MCF 10A (cell line): ENCODE measurements at regions of chr17 and their contacts with region 1.

Region 1: DNA sequence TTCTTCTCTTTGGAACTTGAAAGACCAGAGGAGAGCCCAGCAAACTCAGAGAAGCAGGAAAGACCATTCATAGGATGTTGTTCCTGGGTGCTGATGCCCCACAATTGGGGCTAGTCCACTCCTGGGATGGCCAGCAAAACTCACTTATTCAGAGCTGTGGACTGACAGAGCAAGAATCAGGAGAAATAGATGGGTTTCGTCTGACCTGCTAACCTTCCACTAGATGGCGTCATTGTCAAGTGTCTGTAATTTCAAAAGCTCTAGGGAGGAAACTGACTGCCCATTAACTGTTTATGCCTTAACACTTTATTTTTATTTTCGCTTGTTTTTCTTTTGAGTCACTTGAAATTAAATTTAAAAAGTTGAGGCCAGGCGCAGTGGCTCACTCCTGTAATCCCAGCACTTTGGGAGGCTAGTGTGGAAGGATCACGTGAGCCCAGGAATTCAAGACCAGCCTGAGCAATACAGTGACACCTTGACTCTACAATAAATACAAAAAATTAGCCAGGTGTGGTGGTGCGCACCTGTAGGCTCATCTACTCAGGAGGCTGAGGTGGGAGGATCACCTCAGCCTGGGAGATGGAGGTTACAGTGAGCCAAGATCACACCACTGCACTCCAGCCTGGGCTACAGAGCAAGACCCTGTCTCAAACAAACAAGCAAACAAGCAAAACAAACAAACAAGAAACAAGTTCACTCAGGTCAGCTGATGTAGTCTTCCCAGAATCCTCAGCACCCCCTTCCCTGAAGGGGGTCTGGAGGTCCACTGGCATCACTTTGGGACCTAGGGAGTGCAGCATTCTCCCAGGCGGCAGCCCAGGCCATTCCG is 28.6 kb upstream of the MILR1 start:
- DNase-seq: peak; percentile 87
- H3K4me3 Mint-ChIP-seq: no peak overlapping the region
- H3K27ac Mint-ChIP-seq: no peak overlapping the region
- H3K4me1 Mint-ChIP-seq: no peaks in the 10 kb centered on the region
- H3K27me3 Mint-ChIP-seq: no peaks in the 10 kb centered on the region
- CTCF ChIP-seq: peak; percentile 73

Region 2: GRCh38 chr17:64262417-64263260 is 157.7 kb before region 1 on chr17 and contains the start of gene TEX2:
- CTCF ChIA-PET with region 1: no interaction called
- POLR2A ChIA-PET with region 1: no interaction called
- intact Hi-C with region 1: no loop called
- DNase-seq: peak; percentile 38
- H3K4me3 Mint-ChIP-seq: peak within 1 kb of the TSS; percentile 84
- H3K27ac Mint-ChIP-seq: peak within 1 kb of the TSS; percentile 36
- H3K4me1 Mint-ChIP-seq: peaks cover 24% of the 10 kb centered on the region
- H3K27me3 Mint-ChIP-seq: no peaks in the 10 kb centered on the region
- CTCF ChIP-seq: no peak
- total RNA-seq, gene TEX2: 33.7 and 42.2 TPM in 2 replicates

Region 3: DNA sequence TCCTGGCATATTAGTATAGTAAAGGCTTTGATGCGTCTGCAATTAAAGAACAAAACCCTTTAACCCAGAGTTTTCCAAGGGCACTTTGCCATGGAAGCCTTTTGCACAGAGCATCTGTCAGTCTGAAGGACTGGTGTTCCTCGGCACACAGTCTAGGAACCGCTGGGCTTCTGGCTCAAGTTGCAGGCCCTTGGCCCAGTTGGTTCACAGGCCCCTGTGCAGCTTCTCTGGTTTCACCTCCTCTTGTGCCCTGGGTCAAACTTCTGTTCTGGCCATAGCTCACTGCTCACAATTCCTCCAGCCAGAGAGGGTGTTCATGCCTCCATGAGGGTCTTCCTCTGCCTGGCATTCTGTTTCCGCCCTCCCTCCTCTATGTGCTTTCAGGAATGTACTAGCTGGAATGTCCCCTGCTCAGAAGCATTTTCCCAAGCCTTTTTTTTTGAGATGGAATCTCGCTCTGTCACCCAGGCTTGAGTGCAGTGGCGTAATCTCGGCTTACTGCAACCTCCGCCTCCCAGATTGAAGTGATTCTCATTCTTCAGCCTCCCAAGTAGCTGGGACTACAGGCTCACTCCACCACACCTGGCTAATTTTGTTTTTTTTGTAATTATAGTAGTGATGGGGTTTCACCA is 122.8 kb before region 1 on chr17:
- CTCF ChIA-PET with region 1: interaction called, 93 read pairs
- POLR2A ChIA-PET with region 1: interaction called, 4 read pairs
- intact Hi-C with region 1: no loop called
- DNase-seq: no peak
- H3K4me3 Mint-ChIP-seq: no peak overlapping the region
- H3K27ac Mint-ChIP-seq: no peak overlapping the region
- H3K4me1 Mint-ChIP-seq: no peaks in the 10 kb centered on the region
- H3K27me3 Mint-ChIP-seq: no peaks in the 10 kb centered on the region
- CTCF ChIP-seq: no peak

Region 4: DNA sequence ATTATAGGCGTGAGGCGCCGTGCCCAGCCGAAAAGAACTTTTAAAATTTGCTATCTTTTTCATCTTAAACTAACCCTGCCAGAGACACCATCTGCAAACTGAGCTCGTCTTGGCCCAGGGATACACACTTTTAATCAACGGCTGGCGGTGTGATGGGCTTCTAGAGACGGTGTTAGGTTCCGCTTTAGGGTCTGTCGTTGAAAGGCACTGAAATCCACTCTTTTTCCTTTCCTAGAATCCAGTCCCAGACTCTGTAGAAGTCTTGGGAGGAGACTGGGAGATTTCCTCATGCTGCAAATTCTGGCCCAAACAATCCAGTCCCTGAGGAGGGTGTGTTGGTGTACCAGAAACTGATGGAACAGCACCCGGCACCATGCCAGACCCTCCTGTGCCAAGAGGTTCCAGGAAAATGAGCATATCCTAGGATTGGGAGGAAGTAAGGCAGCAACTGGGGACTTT is 105.3 kb before region 1 on chr17:
- CTCF ChIA-PET with region 1: interaction called, 239 read pairs
- POLR2A ChIA-PET with region 1: interaction called, 4 read pairs
- intact Hi-C with region 1: no loop called
- DNase-seq: peak; percentile 86
- H3K4me3 Mint-ChIP-seq: no peak overlapping the region
- H3K27ac Mint-ChIP-seq: no peak overlapping the region
- H3K4me1 Mint-ChIP-seq: peaks cover 10% of the 10 kb centered on the region
- H3K27me3 Mint-ChIP-seq: no peaks in the 10 kb centered on the region
- CTCF ChIP-seq: no peak

Region 5: DNA sequence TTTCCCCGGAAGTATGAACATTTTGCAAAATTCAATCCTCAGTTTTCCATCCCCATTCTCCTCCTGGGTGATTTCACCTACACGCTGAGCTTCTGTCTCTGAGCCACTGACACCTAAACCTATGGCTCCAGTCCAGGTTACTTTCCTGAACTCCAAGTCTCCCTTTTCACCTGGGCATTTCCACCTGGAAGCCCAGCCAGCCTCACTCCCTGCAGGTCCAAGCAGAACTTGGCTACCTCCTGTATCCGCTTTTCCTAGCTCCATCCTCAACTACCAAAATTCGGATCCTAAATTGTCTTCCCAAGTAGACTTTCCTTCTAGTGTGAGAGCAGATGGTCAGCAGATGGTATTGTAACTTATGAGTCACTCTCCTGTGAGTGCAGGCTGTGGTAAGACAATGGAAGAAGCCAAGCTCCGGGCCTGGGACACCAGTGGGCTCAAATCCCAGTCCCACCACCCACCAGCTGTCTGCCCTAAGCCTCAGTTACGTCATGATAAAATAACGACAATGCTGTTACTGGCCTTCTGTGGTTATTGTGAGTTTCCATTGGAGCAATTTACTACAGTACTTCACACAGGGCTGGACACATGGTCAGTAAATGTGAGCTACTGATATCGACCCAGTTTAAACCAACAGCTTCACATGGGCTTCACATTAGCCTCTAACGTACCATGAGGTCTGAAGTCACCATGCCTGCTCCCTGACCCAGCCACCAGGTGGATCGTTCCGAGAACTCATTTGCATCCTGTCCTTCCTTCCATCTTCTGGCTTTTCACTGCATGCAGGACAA is 63.0 kb before region 1 on chr17:
- CTCF ChIA-PET with region 1: interaction called, 17 read pairs
- POLR2A ChIA-PET with region 1: no interaction called
- intact Hi-C with region 1: no loop called
- DNase-seq: peak; percentile 98
- H3K4me3 Mint-ChIP-seq: peak overlapping the region; percentile 15
- H3K27ac Mint-ChIP-seq: peak overlapping the region; percentile 76
- H3K4me1 Mint-ChIP-seq: peaks cover 36% of the 10 kb centered on the region
- H3K27me3 Mint-ChIP-seq: no peaks in the 10 kb centered on the region
- CTCF ChIP-seq: no peak

Region 6: DNA sequence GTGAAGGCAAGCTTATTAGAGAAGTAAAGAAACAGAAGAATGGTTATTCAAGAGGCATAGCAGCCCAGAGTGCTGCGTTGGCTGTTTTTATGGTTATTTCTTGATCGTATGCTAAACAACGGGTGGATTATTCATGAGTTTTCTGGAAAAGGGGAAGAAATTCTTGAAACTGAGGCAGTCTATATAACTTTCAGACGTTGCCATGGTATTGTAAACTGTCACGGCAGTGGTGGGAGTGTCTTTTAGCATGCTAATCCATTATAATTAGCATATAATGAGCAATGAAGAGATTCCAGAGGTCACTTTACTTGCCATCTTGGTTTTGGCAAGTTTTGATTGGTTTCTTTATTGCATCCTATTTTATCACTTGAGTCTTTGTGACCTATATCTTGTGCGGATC is 11.2 kb after region 1 on chr17:
- CTCF ChIA-PET with region 1: interaction called, 28 read pairs
- POLR2A ChIA-PET with region 1: no interaction called
- intact Hi-C with region 1: no loop called
- DNase-seq: no peak
- H3K4me3 Mint-ChIP-seq: no peak overlapping the region
- H3K27ac Mint-ChIP-seq: no peak overlapping the region
- H3K4me1 Mint-ChIP-seq: no peaks in the 10 kb centered on the region
- H3K27me3 Mint-ChIP-seq: no peaks in the 10 kb centered on the region
- CTCF ChIP-seq: no peak

Region 7: GRCh38 chr17:64496786-64497564 is 76.6 kb after region 1 on chr17 and contains the start of gene POLG2:
- CTCF ChIA-PET with region 1: interaction called, 49 read pairs
- POLR2A ChIA-PET with region 1: interaction called, 13 read pairs
- intact Hi-C with region 1: loop called (anchors 2 kb)
- DNase-seq: peak; percentile 94
- H3K4me3 Mint-ChIP-seq: peak within 1 kb of the TSS; percentile 100
- H3K27ac Mint-ChIP-seq: peak within 1 kb of the TSS; percentile 98
- H3K4me1 Mint-ChIP-seq: peaks cover 39% of the 10 kb centered on the region
- H3K27me3 Mint-ChIP-seq: no peaks in the 10 kb centered on the region
- CTCF ChIP-seq: peak; percentile 38
- total RNA-seq, gene POLG2: 27.5 and 29.4 TPM in 2 replicates

Region 8: GRCh38 chr17:65198653-65199382 is 778.5 kb after region 1 on chr17:
- CTCF ChIA-PET with region 1: interaction called, 3 read pairs
- POLR2A ChIA-PET with region 1: no interaction called
- intact Hi-C with region 1: loop called (anchors 5 kb)
- DNase-seq: peak; percentile 63
- H3K4me3 Mint-ChIP-seq: no peak overlapping the region
- H3K27ac Mint-ChIP-seq: no peak overlapping the region
- H3K4me1 Mint-ChIP-seq: peaks cover 8% of the 10 kb centered on the region
- H3K27me3 Mint-ChIP-seq: no peaks in the 10 kb centered on the region
- CTCF ChIP-seq: peak; percentile 63